Lower lobe of right lung (tissue), 2 donors: ENCODE measurements at regions of chr22 and their contacts with region 1.

Region 1: DNA sequence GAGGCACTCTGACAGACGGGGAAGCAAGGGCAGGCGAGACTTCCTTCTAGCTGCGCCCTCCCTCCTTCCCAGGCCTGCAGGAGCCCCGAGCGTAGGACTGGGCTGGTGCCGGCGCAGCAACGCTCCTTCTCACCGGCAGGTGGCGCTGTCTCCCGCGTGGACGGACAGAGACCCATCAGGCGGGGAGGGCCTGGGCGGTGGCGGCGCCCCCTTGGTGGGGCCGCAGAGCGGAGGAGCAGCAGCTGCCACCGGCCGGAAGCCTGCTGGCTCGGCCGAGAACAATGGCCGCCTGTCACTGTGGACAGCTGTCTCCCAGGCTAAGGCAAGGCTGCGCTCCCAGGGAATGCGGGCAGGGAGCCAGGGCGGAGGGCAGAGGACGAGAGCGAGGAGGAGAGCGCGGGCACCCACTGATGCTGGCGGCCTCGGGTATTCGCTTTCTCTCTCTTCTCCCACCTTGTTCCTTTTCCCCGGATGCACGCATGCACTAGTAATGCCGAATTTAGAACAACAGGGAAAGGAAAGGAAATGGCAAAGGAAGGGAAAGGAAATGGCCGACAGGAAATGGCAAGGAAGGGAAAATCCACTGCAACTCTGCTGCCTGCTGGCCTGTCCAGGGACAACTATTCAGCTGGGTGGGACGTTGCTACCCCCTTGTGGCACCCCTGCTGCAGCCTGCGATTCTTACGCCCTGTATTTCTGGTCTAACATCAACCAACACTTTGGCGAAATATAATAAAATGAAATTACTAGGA is 14.4 kb downstream of the PPM1F start:
- DNase-seq: peak; percentile 97
- ATAC-seq: peak; percentile 94 to 96
- H3K4me3 ChIP-seq: peak overlapping the region; percentile 61
- H3K27ac ChIP-seq: peak overlapping the region; percentile 94
- H3K4me1 ChIP-seq: peaks cover 79% of the 10 kb centered on the region
- H3K27me3 ChIP-seq: no peaks in the 10 kb centered on the region
- CTCF ChIP-seq: peak; percentile 99

Region 2: DNA sequence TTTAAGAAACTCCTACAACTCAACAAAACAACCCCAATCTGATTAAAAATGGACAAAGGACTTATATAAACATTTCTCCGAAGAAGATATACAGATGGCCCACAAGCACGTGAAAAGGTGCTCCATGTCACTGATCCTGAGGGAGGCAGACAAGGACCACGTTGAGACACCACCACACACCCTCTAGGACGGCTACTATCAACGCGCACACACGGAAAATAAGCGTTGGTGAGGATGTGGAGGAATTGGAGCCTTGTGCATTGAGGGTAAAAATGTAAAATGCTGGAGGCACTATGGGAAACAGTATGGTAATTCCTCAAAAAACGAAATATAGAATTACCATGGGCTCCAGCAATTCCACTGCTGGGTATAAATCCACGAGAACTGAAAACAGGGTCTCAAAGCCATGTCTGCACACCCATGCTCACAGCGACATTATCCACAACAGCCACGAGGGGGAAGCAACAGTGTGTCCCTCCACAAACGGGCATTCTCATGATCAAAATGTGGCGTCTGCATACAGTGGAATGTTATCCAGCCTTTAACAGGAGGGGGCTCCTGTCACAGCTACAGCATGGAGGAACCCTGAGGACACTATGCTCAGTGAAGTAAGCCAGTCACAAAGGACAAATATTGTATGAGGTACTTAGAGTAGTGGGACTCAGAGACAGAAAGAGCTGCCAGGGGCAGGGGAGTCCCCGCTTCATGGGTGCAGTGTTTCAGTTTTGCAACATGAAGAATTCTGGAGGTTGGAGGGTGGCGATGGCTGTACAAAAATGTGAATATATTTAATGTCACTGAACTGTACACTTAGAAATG is 225.1 kb before region 1 on chr22:
- intact Hi-C with region 1: loop called (anchors 10 kb)
- DNase-seq: peak; percentile 63
- ATAC-seq: peak; percentile 91 to 94
- H3K4me3 ChIP-seq: no peak overlapping the region
- H3K27ac ChIP-seq: no peak overlapping the region
- H3K4me1 ChIP-seq: peaks cover 9% of the 10 kb centered on the region
- H3K27me3 ChIP-seq: no peaks in the 10 kb centered on the region
- CTCF ChIP-seq: peak; percentile 79

Region 3: GRCh38 chr22:21889251-21889990 is 48.8 kb before region 1 on chr22:
- intact Hi-C with region 1: no loop called
- DNase-seq: no peak
- ATAC-seq: no peak
- H3K4me3 ChIP-seq: no peak overlapping the region
- H3K27ac ChIP-seq: no peak overlapping the region
- H3K4me1 ChIP-seq: no peaks in the 10 kb centered on the region
- H3K27me3 ChIP-seq: no peaks in the 10 kb centered on the region
- CTCF ChIP-seq: no peak

Region 4: DNA sequence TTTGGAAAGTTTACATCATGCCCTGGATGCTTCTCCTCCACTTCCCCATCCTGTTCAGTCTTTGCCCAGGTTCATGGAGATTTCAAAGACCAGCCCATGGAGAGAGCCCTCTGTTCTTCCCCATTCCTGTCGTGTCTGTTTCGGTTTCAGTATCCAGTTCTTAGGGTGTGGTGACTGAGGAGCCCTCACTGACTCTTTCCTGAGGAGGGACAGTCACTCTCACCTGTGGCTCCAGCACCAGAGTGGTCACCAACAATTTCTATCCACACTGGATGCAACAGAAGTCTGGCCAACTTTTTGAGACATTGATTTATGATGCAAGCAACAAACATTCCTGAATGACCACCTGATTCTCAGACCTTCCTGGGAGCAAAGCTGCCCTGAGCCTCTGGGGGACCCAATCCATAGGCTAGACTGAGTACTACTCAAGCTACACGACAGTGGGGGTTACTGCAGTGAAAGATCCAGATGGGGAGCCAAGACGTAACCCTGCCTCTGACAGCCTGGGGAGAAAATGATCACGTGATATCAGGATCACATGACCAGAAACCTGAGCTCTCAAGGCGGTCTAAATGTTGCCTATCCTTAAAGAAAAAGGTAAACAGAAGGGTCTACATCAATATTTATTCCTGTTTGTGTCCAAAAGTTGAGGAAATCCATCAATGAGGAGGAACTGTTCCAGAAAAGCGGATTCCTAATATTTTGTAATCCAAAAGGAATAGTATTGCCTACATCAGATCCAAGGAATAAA is 230.1 kb after region 1 on chr22:
- intact Hi-C with region 1: no loop called
- DNase-seq: no peak
- ATAC-seq: peak in 1 of 2 donors; percentile 48
- H3K4me3 ChIP-seq: no peak overlapping the region
- H3K27ac ChIP-seq: no peak overlapping the region
- H3K4me1 ChIP-seq: peaks cover 5% of the 10 kb centered on the region
- H3K27me3 ChIP-seq: peaks cover 10% of the 10 kb centered on the region
- CTCF ChIP-seq: no peak

Region 5: GRCh38 chr22:22207845-22208564 is 269.8 kb after region 1 on chr22:
- intact Hi-C with region 1: no loop called
- DNase-seq: peak; percentile 73
- ATAC-seq: peak; percentile 83 to 90
- H3K4me3 ChIP-seq: no peak overlapping the region
- H3K27ac ChIP-seq: no peak overlapping the region
- H3K4me1 ChIP-seq: no peaks in the 10 kb centered on the region
- H3K27me3 ChIP-seq: peaks cover 13% of the 10 kb centered on the region
- CTCF ChIP-seq: peak; percentile 61